ENCODE measurements at regions of chrX and their contacts with region 1.

Region 1: GRCh38 chrX:148530464-148531077 is 30.2 kb downstream of the AFF2 start:
- DNase-seq: peak; percentile 33
- ATAC-seq: peak; percentile 42; the same call in 1 of the 2 replicates
- H3K4me3 ChIP-seq: no peak overlapping the region
- H3K27ac ChIP-seq: no peak overlapping the region
- H3K4me1 ChIP-seq: no peaks in the 10 kb centered on the region
- H3K27me3 ChIP-seq: no peaks in the 10 kb centered on the region
- CTCF ChIP-seq: peak; percentile 59
- POLR2A ChIP-seq: no peak
- RAD21 ChIP-seq: peak; percentile 31

Region 2: GRCh38 chrX:148310426-148311165 is 220.0 kb before region 1 on chrX:
- CTCF ChIA-PET with region 1: no interaction called
- POLR2A ChIA-PET with region 1: no interaction called
- dilution Hi-C with region 1: no loop called
- in situ Hi-C with region 1: no loop called
- intact Hi-C with region 1: no loop called
- DNase-seq: no peak
- ATAC-seq: no peak
- H3K4me3 ChIP-seq: no peak overlapping the region
- H3K27ac ChIP-seq: no peak overlapping the region
- H3K4me1 ChIP-seq: no peaks in the 10 kb centered on the region
- H3K27me3 ChIP-seq: no peaks in the 10 kb centered on the region
- CTCF ChIP-seq: no peak
- POLR2A ChIP-seq: no peak
- RAD21 ChIP-seq: no peak

Region 3: GRCh38 chrX:148541544-148541983 is 11.0 kb after region 1 on chrX:
- CTCF ChIA-PET with region 1: interaction called, 3 read pairs
- POLR2A ChIA-PET with region 1: interaction called, 12 read pairs
- dilution Hi-C with region 1: no loop called
- in situ Hi-C with region 1: no loop called
- intact Hi-C with region 1: no loop called
- DNase-seq: no peak
- ATAC-seq: no peak
- H3K4me3 ChIP-seq: no peak overlapping the region
- H3K27ac ChIP-seq: no peak overlapping the region
- H3K4me1 ChIP-seq: no peaks in the 10 kb centered on the region
- H3K27me3 ChIP-seq: no peaks in the 10 kb centered on the region
- CTCF ChIP-seq: no peak
- POLR2A ChIP-seq: no peak
- RAD21 ChIP-seq: no peak